ENCODE measurements at regions of chr12 and their contacts with region 1.

Region 1: GRCh38 chr12:13534645-13535398 is 338.3 kb downstream of the EMP1 start:
- DNase-seq: peak; percentile 83
- H3K4me3 ChIP-seq: peak overlapping the region; percentile 14
- H3K27ac ChIP-seq: no peak overlapping the region
- H3K4me1 ChIP-seq: no peaks in the 10 kb centered on the region
- H3K27me3 ChIP-seq: peaks cover 72% of the 10 kb centered on the region
- CTCF ChIP-seq: peak; percentile 96

Region 2: GRCh38 chr12:12384571-12385340 is 1150.1 kb before region 1 on chr12:
- CTCF ChIA-PET with region 1: no interaction called
- POLR2A ChIA-PET with region 1: no interaction called
- intact Hi-C with region 1: no loop called
- DNase-seq: no peak
- H3K4me3 ChIP-seq: no peak overlapping the region
- H3K27ac ChIP-seq: no peak overlapping the region
- H3K4me1 ChIP-seq: no peaks in the 10 kb centered on the region
- H3K27me3 ChIP-seq: no peaks in the 10 kb centered on the region
- CTCF ChIP-seq: no peak

Region 3: DNA sequence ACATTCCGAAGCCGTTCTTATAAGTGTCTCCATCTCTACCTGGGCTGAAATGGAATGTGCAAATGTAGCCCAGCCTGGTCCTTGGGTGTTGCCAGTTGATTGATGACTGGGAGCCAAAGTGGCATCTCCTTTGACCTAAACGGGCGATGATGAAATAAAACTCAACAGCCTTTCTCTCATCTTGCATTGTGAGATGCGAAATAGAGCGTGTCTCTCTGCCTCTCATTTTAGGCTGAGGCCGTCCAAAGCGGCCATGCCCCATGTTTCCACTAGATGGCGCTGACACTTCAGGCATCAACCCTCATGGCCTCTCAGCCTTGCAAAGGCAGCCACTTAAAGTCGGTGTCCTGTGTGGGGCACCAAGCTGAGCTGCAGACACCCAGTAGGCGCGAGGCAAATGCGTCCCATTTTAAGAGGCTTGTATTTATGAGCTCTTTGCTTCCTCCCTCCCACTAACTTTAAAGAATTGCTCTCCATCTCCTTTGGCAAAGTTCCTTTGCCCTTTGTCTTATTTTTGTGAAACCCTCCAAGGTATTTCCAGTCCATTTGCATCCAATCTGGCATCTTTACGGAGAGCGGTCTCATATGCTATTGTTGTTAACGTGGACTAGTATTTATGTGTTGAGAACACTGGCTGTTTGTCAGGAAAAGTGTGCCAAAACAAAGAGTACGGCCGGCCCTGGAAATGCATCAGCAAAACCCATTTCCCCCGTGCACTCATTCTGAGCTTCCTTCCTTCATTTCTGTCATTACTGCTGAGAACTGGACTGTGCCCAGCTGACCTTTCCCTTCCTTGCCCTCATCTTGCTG is 618.5 kb before region 1 on chr12:
- CTCF ChIA-PET with region 1: no interaction called
- POLR2A ChIA-PET with region 1: no interaction called
- intact Hi-C with region 1: loop called (anchors 10 kb)
- DNase-seq: peak; percentile 90
- H3K4me3 ChIP-seq: no peak overlapping the region
- H3K27ac ChIP-seq: no peak overlapping the region
- H3K4me1 ChIP-seq: peaks cover 7% of the 10 kb centered on the region
- H3K27me3 ChIP-seq: no peaks in the 10 kb centered on the region
- CTCF ChIP-seq: peak; percentile 97

Region 4: GRCh38 chr12:13278249-13278787 is 256.5 kb before region 1 on chr12:
- CTCF ChIA-PET with region 1: interaction called, 8 read pairs
- POLR2A ChIA-PET with region 1: no interaction called
- intact Hi-C with region 1: loop called (anchors 2 kb)
- DNase-seq: peak; percentile 74
- H3K4me3 ChIP-seq: no peak overlapping the region
- H3K27ac ChIP-seq: no peak overlapping the region
- H3K4me1 ChIP-seq: no peaks in the 10 kb centered on the region
- H3K27me3 ChIP-seq: peaks cover 78% of the 10 kb centered on the region
- CTCF ChIP-seq: peak; percentile 99

Region 5: DNA sequence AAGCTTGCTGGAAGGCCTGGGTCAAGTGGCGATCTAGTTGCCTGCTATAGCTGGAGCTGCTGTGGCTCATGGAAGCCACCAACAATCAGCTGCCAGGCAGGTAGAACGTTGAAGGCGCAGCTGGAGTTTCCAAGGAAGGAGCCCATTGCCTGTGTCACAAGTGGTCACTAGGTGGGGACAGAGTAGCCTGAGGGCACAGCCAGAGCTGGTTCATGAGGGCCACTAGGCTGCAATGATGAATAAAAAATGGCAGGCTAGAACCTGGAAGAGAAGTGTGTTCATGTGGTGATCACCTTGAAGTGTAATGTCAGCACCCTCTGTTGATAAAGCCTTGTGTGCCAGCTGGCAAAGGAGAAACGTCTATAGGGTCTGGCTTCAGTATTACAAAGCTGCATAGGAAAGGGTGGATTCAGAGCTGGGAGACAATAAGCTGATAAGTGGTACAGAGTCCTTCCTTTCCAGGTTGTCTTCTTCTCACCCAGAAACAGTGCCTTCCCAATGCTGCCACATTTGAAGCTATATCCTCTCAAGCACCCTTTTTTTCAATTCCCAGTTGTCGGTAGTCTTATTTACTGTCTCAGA is 172.5 kb before region 1 on chr12:
- CTCF ChIA-PET with region 1: interaction called, 19 read pairs
- POLR2A ChIA-PET with region 1: no interaction called
- intact Hi-C with region 1: loop called (anchors 1 kb)
- DNase-seq: peak; percentile 76
- H3K4me3 ChIP-seq: no peak overlapping the region
- H3K27ac ChIP-seq: no peak overlapping the region
- H3K4me1 ChIP-seq: no peaks in the 10 kb centered on the region
- H3K27me3 ChIP-seq: peaks cover 57% of the 10 kb centered on the region
- CTCF ChIP-seq: peak; percentile 96

Region 6: GRCh38 chr12:13573698-13574321 is 39.0 kb after region 1 on chr12:
- CTCF ChIA-PET with region 1: no interaction called
- POLR2A ChIA-PET with region 1: no interaction called
- intact Hi-C with region 1: no loop called
- DNase-seq: peak; percentile 9
- H3K4me3 ChIP-seq: no peak overlapping the region
- H3K27ac ChIP-seq: no peak overlapping the region
- H3K4me1 ChIP-seq: no peaks in the 10 kb centered on the region
- H3K27me3 ChIP-seq: peaks cover 33% of the 10 kb centered on the region
- CTCF ChIP-seq: no peak

Measured in A673 (cell line).